ENCODE measurements at regions of chr3 and their contacts with region 1.

Region 1: GRCh38 chr3:156674046-156674910 is at the start of gene TIPARP:
- DNase-seq: peak; percentile 100
- H3K4me3 Mint-ChIP-seq: peak within 1 kb of the TSS; percentile 91
- H3K27ac Mint-ChIP-seq: peak within 1 kb of the TSS; percentile 94
- H3K4me1 Mint-ChIP-seq: peaks cover 39% of the 10 kb centered on the region
- H3K27me3 Mint-ChIP-seq: no peaks in the 10 kb centered on the region
- total RNA-seq, gene TIPARP: 17.7 and 18.7 TPM in 2 replicates

Region 2: GRCh38 chr3:156554842-156555687 is 119.2 kb before region 1 on chr3 and contains the start of gene SSR3:
- intact Hi-C with region 1: loop called (anchors 1 kb)
- DNase-seq: peak; percentile 100
- H3K4me3 Mint-ChIP-seq: peak within 1 kb of the TSS; percentile 97
- H3K27ac Mint-ChIP-seq: peak within 1 kb of the TSS; percentile 96
- H3K4me1 Mint-ChIP-seq: peaks cover 48% of the 10 kb centered on the region
- H3K27me3 Mint-ChIP-seq: no peaks in the 10 kb centered on the region
- total RNA-seq, gene SSR3: 151 and 153 TPM in 2 replicates

Region 3: GRCh38 chr3:156643729-156644389 is 30.4 kb before region 1 on chr3:
- intact Hi-C with region 1: loop called (anchors 2 kb)
- DNase-seq: peak; percentile 87
- H3K4me3 Mint-ChIP-seq: peak overlapping the region; percentile 71
- H3K27ac Mint-ChIP-seq: peak overlapping the region; percentile 79
- H3K4me1 Mint-ChIP-seq: peaks cover 25% of the 10 kb centered on the region
- H3K27me3 Mint-ChIP-seq: peaks cover 3% of the 10 kb centered on the region

Region 4: GRCh38 chr3:156787926-156788663 is 113.8 kb after region 1 on chr3:
- intact Hi-C with region 1: loop called (anchors 2 kb)
- DNase-seq: no peak
- H3K4me3 Mint-ChIP-seq: no peak overlapping the region
- H3K27ac Mint-ChIP-seq: peak overlapping the region; percentile 32
- H3K4me1 Mint-ChIP-seq: peaks cover 45% of the 10 kb centered on the region
- H3K27me3 Mint-ChIP-seq: no peaks in the 10 kb centered on the region

Region 5: GRCh38 chr3:157088601-157089454 is 414.6 kb after region 1 on chr3:
- intact Hi-C with region 1: loop called (anchors 1 kb)
- DNase-seq: peak; percentile 98
- H3K4me3 Mint-ChIP-seq: peak overlapping the region; percentile 75
- H3K27ac Mint-ChIP-seq: peak overlapping the region; percentile 93
- H3K4me1 Mint-ChIP-seq: peaks cover 71% of the 10 kb centered on the region
- H3K27me3 Mint-ChIP-seq: no peaks in the 10 kb centered on the region

Region 6: GRCh38 chr3:157174649-157175498 is 500.6 kb after region 1 on chr3:
- intact Hi-C with region 1: loop called (anchors 1 kb)
- DNase-seq: peak; percentile 99
- H3K4me3 Mint-ChIP-seq: peak overlapping the region; percentile 89
- H3K27ac Mint-ChIP-seq: peak overlapping the region; percentile 99
- H3K4me1 Mint-ChIP-seq: peaks cover 25% of the 10 kb centered on the region
- H3K27me3 Mint-ChIP-seq: peaks cover 2% of the 10 kb centered on the region

Measured in activated CD4-positive, alpha-beta T cell treated with anti-CD3 and anti-CD28 coated beads, Interleukin-2, amount 10 ng/mL, durations not matched to agents 24 days and 14 days (primary cell).